ENCODE measurements at regions of chr11 and their contacts with region 1.

Region 1: GRCh38 chr11:12043959-12044819 is 35.8 kb upstream of the DKK3 start:
- DNase-seq: peak; percentile 73 to 84 (median 78)
- ATAC-seq: peak; percentile 91
- H3K4me3 ChIP-seq: no peak overlapping the region
- H3K27ac ChIP-seq: no peak overlapping the region; the same call in 2 of the 3 replicates
- H3K4me1 ChIP-seq: peaks cover 0 to 12% of the 10 kb centered on the region in 2 experiments; a peak in 3 of 5 replicates
- H3K27me3 ChIP-seq: no peaks in the 10 kb centered on the region
- CTCF ChIP-seq: peak; percentile 85 to 92 (median 90)
- EP300 ChIP-seq: no peak
- POLR2A ChIP-seq: no peak
- RAD21 ChIP-seq: peak; percentile 95 to 97

Region 2: DNA sequence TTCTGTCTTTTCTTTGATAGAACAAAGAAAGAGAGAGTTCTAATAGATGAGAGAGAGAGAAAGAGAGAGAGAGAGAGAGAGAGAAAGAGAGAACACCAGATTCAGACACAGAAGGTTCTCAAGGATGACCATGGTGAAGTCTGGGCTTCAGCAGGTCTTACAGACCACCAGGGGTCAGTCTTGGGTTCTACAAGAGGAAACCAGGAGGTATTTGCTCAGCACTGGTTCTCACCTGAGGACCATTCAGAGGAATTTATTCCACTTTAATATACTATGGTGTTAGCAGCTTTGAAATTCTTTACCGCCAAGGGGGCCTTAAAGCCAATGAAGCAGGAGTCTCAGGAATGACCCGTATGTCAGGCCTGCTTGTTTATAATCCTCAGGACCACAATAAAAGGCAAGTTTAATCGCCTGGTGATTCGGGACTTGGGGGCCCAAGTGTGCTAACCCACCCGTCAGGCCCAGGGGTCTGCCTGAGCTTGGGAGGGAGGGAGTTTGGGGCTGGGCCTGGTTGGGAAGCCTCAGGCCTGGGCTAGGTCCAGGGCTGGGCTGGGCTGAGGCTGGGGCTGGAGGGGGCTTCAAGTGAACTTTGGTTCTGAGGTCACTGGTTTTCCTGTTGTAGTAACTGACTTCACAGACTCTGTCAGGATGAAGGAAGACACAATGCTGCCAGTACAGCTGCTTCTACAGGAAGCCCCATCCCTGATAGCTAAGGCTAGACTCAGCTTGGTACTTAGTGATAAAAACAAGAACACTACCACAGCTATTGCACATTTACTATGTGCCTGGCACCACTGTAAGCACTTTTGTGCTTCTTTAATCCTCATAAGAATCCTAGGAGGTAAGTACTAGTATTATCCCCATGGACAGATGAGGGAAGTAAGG is 1007.1 kb before region 1 on chr11:
- CTCF ChIA-PET with region 1: no interaction called
- POLR2A ChIA-PET with region 1: no interaction called
- in situ Hi-C with region 1: no loop called
- intact Hi-C with region 1: loop called (anchors 10 kb)
- DNase-seq: peak; percentile 38 to 69 (median 41)
- ATAC-seq: peak; percentile 92
- H3K4me3 ChIP-seq: no peak overlapping the region
- H3K27ac ChIP-seq: no peak overlapping the region
- H3K4me1 ChIP-seq: no peaks in the 10 kb centered on the region
- H3K27me3 ChIP-seq: peaks cover 3 to 30% of the 10 kb centered on the region in 2 experiments; a peak in 4 of 5 replicates
- CTCF ChIP-seq: peak; percentile 65 to 77 (median 72)
- EP300 ChIP-seq: no peak
- POLR2A ChIP-seq: no peak
- RAD21 ChIP-seq: peak; percentile 46 to 80; a peak in 3 of 4 replicates

Region 3: GRCh38 chr11:11798586-11799438 is 245.4 kb before region 1 on chr11:
- CTCF ChIA-PET with region 1: interaction called, 15 read pairs
- POLR2A ChIA-PET with region 1: no interaction called
- in situ Hi-C with region 1: loop called (anchors 5 kb)
- intact Hi-C with region 1: loop called (anchors 1 kb)
- DNase-seq: peak; percentile 64 to 83 (median 71)
- ATAC-seq: peak; percentile 97
- H3K4me3 ChIP-seq: no peak overlapping the region
- H3K27ac ChIP-seq: no peak overlapping the region
- H3K4me1 ChIP-seq: no peaks in the 10 kb centered on the region; a peak in 1 of 5 replicates
- H3K27me3 ChIP-seq: no peaks in the 10 kb centered on the region; a peak in 1 of 5 replicates
- CTCF ChIP-seq: peak; percentile 87 to 93 (median 92)
- EP300 ChIP-seq: no peak
- POLR2A ChIP-seq: no peak
- RAD21 ChIP-seq: peak; percentile 83 to 93

Region 4: DNA sequence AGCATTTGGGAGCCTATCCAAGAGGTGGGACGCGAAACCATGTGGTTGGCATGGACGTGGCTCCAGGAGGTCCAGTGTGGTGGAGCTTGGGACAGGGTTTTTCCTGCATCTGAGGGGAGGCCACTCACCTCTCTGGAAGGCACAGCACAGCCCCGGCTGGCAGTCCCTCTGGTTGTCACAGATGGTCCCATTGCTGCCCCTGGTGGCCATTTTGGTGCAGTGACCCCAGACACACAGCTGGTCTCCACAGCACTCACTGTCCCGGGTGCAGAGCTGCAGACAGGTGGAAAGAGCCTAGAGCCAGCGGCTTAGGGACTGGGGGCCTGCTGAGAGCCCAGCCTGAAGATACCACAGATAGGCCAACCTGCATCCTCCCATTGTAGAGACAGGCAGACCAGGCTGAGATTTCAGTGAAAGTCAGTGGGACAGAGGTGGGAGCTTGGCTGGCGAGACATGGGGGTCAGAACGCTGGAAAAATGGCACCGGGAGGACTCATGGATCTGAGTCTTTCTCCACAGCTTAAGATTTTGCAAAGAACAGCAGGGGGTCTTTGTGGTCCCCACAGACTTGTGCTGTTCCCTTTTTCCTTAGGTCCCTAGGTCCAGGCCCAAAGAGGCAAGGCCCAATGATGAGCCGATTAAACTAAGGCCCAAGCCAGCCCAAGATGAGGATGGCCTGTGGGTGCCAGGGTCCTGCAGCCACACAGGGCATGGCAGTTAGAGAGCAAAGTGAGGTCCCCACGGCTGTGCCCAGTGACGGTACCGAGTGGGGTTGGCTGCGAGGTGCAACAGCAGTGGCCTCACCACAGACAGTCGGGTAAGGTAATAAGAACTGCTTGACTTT is 77.1 kb before region 1 on chr11:
- CTCF ChIA-PET with region 1: no interaction called
- POLR2A ChIA-PET with region 1: no interaction called
- in situ Hi-C with region 1: no loop called
- intact Hi-C with region 1: loop called (anchors 5 kb)
- DNase-seq: peak; percentile 81 to 86 (median 84)
- ATAC-seq: peak; percentile 98
- H3K4me3 ChIP-seq: no peak overlapping the region
- H3K27ac ChIP-seq: no peak overlapping the region
- H3K4me1 ChIP-seq: peaks cover 0 to 12% of the 10 kb centered on the region in 2 experiments; a peak in 2 of 5 replicates
- H3K27me3 ChIP-seq: peaks cover 36 to 74% of the 10 kb centered on the region in 2 experiments
- CTCF ChIP-seq: peak; percentile 80 to 95 (median 83)
- EP300 ChIP-seq: no peak
- POLR2A ChIP-seq: no peak
- RAD21 ChIP-seq: peak; percentile 13 to 67; a peak in 2 of 4 replicates

Region 5: DNA sequence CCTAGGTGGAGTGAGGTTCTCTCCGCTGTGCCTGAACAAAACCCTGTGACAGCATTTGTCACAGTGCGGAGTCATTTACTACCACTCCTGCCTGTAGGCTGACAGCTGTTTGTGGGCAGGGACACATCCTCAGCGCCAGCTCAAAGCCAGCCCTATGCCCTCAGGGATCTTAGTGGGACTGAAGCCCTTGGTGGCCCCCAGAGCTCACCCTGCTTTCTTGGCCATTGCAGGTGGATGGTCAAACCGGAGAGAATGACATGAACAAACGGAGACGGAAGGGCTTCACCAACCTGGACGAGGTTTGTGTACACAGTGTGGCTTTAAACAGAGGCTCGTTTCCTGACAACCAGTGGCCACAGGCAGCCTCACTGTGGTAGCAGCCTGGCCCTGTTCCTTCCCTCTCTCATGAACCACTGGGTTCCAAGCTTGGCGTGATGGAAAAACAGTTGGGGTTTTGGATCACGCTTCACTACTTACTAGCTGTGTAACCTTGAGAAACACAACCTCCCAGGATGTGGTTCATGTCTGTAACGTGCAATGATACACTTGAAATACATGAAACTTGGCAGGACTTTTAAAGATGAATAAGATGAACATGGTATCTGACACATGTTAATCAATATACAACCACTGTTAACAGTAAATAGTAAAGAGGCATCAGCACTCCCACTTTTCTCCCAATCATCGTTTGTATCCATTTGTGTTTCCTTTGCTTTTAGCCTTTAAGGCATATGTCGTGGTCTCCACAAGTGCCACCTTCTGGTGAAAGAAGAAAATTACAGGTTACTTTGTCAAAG is 192.0 kb after region 1 on chr11:
- CTCF ChIA-PET with region 1: interaction called, 29 read pairs
- POLR2A ChIA-PET with region 1: no interaction called
- in situ Hi-C with region 1: no loop called
- intact Hi-C with region 1: loop called (anchors 1 kb)
- DNase-seq: peak; percentile 56 to 73 (median 60)
- ATAC-seq: peak; percentile 82
- H3K4me3 ChIP-seq: no peak overlapping the region
- H3K27ac ChIP-seq: peak overlapping the region; percentile 21; the same call in 1 of the 3 replicates
- H3K4me1 ChIP-seq: peaks cover 0 to 7% of the 10 kb centered on the region in 2 experiments; a peak in 3 of 5 replicates
- H3K27me3 ChIP-seq: no peaks in the 10 kb centered on the region
- CTCF ChIP-seq: peak; percentile 61 to 77 (median 72); a peak in 5 of 6 replicates
- EP300 ChIP-seq: no peak
- POLR2A ChIP-seq: no peak
- RAD21 ChIP-seq: peak; percentile 87 to 88

Region 6: GRCh38 chr11:12288212-12288930 is 244.2 kb after region 1 on chr11:
- CTCF ChIA-PET with region 1: interaction called, 110 read pairs
- POLR2A ChIA-PET with region 1: interaction called, 4 read pairs
- in situ Hi-C with region 1: loop called (anchors 5 kb)
- intact Hi-C with region 1: no loop called
- DNase-seq: peak; percentile 76 to 85 (median 80)
- ATAC-seq: peak; percentile 90
- H3K4me3 ChIP-seq: no peak overlapping the region
- H3K27ac ChIP-seq: no peak overlapping the region
- H3K4me1 ChIP-seq: peaks cover 15 to 17% of the 10 kb centered on the region in 2 experiments; a peak in 3 of 5 replicates
- H3K27me3 ChIP-seq: no peaks in the 10 kb centered on the region; a peak in 1 of 5 replicates
- CTCF ChIP-seq: peak; percentile 89 to 95 (median 94)
- EP300 ChIP-seq: no peak
- POLR2A ChIP-seq: no peak
- RAD21 ChIP-seq: peak; percentile 73 to 83

Region 7: DNA sequence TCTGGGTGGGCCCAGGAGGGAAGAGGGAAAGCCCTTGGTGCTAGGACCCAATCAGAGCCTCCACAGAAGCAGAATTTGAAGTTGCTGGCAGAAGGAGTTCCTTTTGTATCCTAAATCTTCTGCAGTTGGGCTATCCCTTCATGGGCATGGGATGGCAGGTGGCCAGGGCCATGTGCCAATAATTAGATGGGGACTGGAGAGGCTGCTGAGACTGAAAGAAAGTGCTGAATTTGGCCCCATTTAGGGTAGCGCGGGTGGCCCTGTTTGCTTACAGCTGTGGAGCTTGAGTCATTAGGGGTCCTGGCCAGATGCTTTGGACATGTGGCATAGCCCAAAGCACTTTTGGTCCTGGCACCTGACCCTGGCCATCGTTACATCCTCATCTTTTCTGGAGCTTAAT is 360.2 kb after region 1 on chr11:
- CTCF ChIA-PET with region 1: no interaction called
- POLR2A ChIA-PET with region 1: no interaction called
- in situ Hi-C with region 1: no loop called
- intact Hi-C with region 1: no loop called
- DNase-seq: no peak
- ATAC-seq: no peak
- H3K4me3 ChIP-seq: no peak overlapping the region
- H3K27ac ChIP-seq: no peak overlapping the region
- H3K4me1 ChIP-seq: no peaks in the 10 kb centered on the region
- H3K27me3 ChIP-seq: peaks cover 4 to 23% of the 10 kb centered on the region in 2 experiments; a peak in 4 of 5 replicates
- CTCF ChIP-seq: no peak
- EP300 ChIP-seq: no peak
- POLR2A ChIP-seq: no peak
- RAD21 ChIP-seq: no peak